Heart left ventricle (tissue), 16 donors: ENCODE measurements at regions of chr3 and their contacts with region 1.

Region 1: DNA sequence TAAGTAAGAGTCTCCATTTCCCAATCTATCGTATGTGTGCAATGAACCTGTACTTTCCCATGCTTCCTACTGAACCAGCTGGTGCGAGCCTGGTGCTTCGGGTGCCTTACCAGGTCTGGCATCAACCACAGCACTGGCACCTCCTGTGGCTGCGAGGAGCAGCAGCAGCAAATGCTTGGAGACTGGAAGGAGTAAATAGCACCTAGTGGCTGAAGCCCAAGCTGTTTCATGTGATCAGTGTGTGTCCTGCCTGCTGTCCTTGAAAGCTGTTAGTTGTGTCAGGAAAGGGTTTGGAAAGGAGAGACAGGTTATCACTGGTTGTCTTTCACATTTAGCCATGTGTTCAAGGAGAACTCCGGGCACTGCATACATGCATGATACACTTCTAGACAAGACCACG is 31.8 kb downstream of the PCOLCE2 start:
- DNase-seq: peak in 4 of 5 donors; percentile 57 to 83 (median 71)
- ATAC-seq: peak; percentile 94 to 98 (median 96)
- H3K4me3 ChIP-seq: no peak overlapping the region
- H3K27ac ChIP-seq: peak overlapping the region in 10 of 12 donors; percentile 32 to 78 (median 59)
- H3K4me1 ChIP-seq: peaks cover 0 to 35% (median 13%) of the 10 kb centered on the region in 12 donors
- H3K27me3 ChIP-seq: no peaks in the 10 kb centered on the region
- CTCF ChIP-seq: peak in 9 of 12 donors; percentile 20 to 53 (median 30)
- POLR2A ChIP-seq: no peak

Region 2: GRCh38 chr3:142896201-142896755 is 39.2 kb after region 1 on chr3:
- intact Hi-C with region 1: no loop called
- DNase-seq: no peak
- ATAC-seq: peak in 1 of 4 donors; percentile 26
- H3K4me3 ChIP-seq: no peak overlapping the region
- H3K27ac ChIP-seq: no peak overlapping the region
- H3K4me1 ChIP-seq: peaks cover 0 to 18% (median 6%) of the 10 kb centered on the region in 12 donors
- H3K27me3 ChIP-seq: no peaks in the 10 kb centered on the region
- CTCF ChIP-seq: no peak
- POLR2A ChIP-seq: no peak

Region 3: GRCh38 chr3:142976621-142977398 is 119.8 kb after region 1 on chr3:
- intact Hi-C with region 1: loop called in 2 of 10 experiments (anchors 10 kb)
- DNase-seq: peak; percentile 84 to 94 (median 87)
- ATAC-seq: peak; percentile 70 to 90 (median 88)
- H3K4me3 ChIP-seq: no peak overlapping the region
- H3K27ac ChIP-seq: peak overlapping the region in 10 of 12 donors; percentile 13 to 84 (median 58)
- H3K4me1 ChIP-seq: peaks cover 0 to 43% (median 17%) of the 10 kb centered on the region in 12 donors
- H3K27me3 ChIP-seq: no peaks in the 10 kb centered on the region
- CTCF ChIP-seq: no peak
- POLR2A ChIP-seq: no peak

Region 4: GRCh38 chr3:142987080-142987700 is 130.1 kb after region 1 on chr3:
- intact Hi-C with region 1: loop called in 1 of 10 experiments (anchors 10 kb)
- DNase-seq: no peak
- ATAC-seq: peak; percentile 51 to 69 (median 60)
- H3K4me3 ChIP-seq: peak overlapping the region in 2 of 12 donors; percentile 1 to 3
- H3K27ac ChIP-seq: peak overlapping the region in 10 of 12 donors; percentile 12 to 75 (median 52)
- H3K4me1 ChIP-seq: peaks cover 0 to 14% (median 6%) of the 10 kb centered on the region in 12 donors
- H3K27me3 ChIP-seq: no peaks in the 10 kb centered on the region
- CTCF ChIP-seq: peak; percentile 58 to 77 (median 70)
- POLR2A ChIP-seq: no peak